GM12878 (cell line): ENCODE measurements at regions of chr2 and their contacts with region 1.

Region 1: GRCh38 chr2:119641562-119642258 is 37.3 kb upstream of the TMEM177 start:
- DNase-seq: peak; percentile 40
- ATAC-seq: peak; percentile 99
- H3K4me3 ChIP-seq: no peak overlapping the region
- H3K27ac ChIP-seq: no peak overlapping the region
- H3K4me1 ChIP-seq: no peaks in the 10 kb centered on the region
- H3K27me3 ChIP-seq: no peaks in the 10 kb centered on the region; a peak in 1 of 4 replicates
- CTCF ChIP-seq: peak; percentile 97
- EP300 ChIP-seq: no peak
- POLR2A ChIP-seq: no peak
- RAD21 ChIP-seq: peak; percentile 88

Region 2: GRCh38 chr2:119407430-119408220 is 234.1 kb before region 1 on chr2:
- CTCF ChIA-PET with region 1: interaction called, 3 read pairs
- POLR2A ChIA-PET with region 1: no interaction called
- RAD21 ChIA-PET with region 1: interaction called, 5 read pairs
- SMC1A ChIA-PET with region 1: no interaction called
- in situ Hi-C with region 1: no loop called
- intact Hi-C with region 1: loop called (anchors 5 kb)
- DNase-seq: peak; percentile 32
- ATAC-seq: peak; percentile 91
- H3K4me3 ChIP-seq: no peak overlapping the region
- H3K27ac ChIP-seq: no peak overlapping the region
- H3K4me1 ChIP-seq: no peaks in the 10 kb centered on the region
- H3K27me3 ChIP-seq: no peaks in the 10 kb centered on the region
- CTCF ChIP-seq: peak; percentile 67 to 88 (median 73)
- EP300 ChIP-seq: no peak
- POLR2A ChIP-seq: no peak
- RAD21 ChIP-seq: peak; percentile 83

Region 3: DNA sequence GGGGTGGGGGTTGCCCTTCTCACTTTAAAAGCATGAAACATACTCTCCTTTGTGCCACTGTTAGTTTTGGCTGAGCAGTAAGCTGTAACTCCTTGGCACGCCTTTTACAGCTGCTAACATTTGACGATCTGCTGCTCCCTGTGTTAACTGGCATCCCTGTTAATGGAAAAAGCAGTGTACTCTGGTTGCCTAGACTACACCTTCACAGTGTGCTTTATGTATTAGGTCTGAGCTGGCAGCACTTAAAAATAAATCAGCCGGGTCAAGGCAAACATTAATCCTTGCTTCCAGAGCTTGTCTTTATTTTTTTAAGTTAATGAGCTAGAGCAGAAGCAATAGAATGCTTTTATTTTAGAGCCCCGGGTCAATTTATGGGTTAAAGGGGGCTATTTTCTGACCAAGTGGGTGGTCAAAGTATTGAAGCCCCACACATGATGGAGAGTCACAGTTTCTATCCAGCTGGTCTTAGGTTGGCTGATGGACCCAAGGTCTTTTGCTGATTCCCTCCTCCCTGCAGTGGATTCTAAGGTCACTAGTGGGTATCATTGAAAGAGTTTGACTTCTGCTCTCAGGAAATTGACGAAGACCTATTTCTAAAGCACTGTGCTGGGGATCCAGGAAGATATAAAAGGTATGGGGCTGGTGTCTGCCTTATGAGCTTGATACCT is 43.0 kb before region 1 on chr2:
- CTCF ChIA-PET with region 1: no interaction called
- POLR2A ChIA-PET with region 1: no interaction called
- RAD21 ChIA-PET with region 1: no interaction called
- SMC1A ChIA-PET with region 1: no interaction called
- in situ Hi-C with region 1: no loop called
- intact Hi-C with region 1: no loop called
- DNase-seq: no peak
- ATAC-seq: no peak
- H3K4me3 ChIP-seq: no peak overlapping the region
- H3K27ac ChIP-seq: no peak overlapping the region
- H3K4me1 ChIP-seq: no peaks in the 10 kb centered on the region
- H3K27me3 ChIP-seq: no peaks in the 10 kb centered on the region; a peak in 2 of 4 replicates
- CTCF ChIP-seq: no peak
- EP300 ChIP-seq: no peak
- POLR2A ChIP-seq: no peak
- RAD21 ChIP-seq: no peak

Region 4: DNA sequence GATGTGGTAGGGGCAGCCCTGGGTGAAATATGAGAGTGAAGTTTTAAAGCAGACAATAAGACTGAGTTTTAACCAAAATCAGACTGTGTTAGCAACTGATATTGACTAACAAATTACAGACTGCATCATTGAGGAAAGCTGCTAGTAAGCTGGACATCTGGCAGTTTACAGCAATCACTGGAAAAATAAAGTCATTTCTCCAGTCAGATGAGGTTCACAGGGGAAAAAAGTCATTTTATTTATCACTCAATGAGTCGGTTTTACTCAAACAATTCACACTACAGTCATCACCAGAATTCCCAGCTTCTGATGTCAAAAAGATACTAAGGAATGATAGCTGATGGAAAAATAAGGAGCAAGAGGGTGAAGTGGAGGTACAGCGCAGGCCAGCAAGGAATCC is 26.8 kb after region 1 on chr2:
- CTCF ChIA-PET with region 1: interaction called, 24 read pairs
- POLR2A ChIA-PET with region 1: no interaction called
- RAD21 ChIA-PET with region 1: interaction called, 3 read pairs
- SMC1A ChIA-PET with region 1: interaction called, 3 read pairs
- in situ Hi-C with region 1: no loop called
- intact Hi-C with region 1: no loop called
- DNase-seq: no peak
- ATAC-seq: no peak
- H3K4me3 ChIP-seq: no peak overlapping the region
- H3K27ac ChIP-seq: no peak overlapping the region
- H3K4me1 ChIP-seq: no peaks in the 10 kb centered on the region
- H3K27me3 ChIP-seq: no peaks in the 10 kb centered on the region; a peak in 1 of 4 replicates
- CTCF ChIP-seq: no peak
- EP300 ChIP-seq: no peak
- POLR2A ChIP-seq: no peak
- RAD21 ChIP-seq: no peak